Gastrocnemius medialis (tissue), 4 donors: ENCODE measurements at regions of chr12 and their contacts with region 1.

Region 1: DNA sequence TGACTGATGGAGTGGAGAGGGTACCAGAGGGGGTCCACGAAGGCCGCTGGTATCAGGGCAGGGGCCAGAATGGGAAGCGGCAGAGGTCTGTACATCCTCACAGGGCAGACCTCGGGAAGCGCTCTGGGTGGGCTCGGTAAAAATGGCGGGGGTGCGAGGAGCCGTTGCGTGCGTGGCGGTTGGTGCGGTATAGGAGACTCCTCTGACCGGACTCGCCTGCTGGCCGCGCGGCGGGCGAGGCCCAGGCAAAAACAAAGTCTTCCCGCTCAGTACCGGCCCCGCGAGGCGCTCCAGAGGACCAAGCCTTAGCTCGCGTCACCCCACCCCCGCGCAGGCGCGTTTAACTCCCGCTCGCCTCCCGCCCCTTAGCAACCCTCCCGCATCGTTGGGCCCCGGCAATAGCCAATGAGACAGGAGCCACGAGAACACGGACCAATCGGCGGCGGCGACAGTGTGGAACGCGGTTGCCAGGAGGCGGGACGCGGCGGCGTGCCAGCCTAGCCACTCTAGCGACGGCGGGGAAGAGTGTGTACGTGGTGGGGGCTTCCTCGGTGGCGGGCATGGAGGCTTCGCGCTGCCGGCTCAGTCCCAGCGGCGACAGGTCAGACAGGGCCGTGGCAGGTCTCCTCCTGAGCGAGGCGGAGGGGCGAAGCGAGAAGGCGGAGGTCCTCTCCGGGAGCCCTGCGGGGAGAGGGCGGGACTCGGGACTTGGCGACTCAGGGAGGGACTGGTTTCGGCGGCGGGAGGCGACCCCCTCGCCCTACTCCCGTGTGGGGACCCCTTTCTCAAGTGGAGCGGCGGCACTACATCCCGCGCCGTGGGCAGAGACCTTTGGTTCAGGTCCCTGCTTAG is at the start of gene TULP3:
- DNase-seq: peak; percentile 99
- ATAC-seq: peak; percentile 98
- H3K4me3 ChIP-seq: peak within 1 kb of the TSS; percentile 89 to 96 (median 93)
- H3K27ac ChIP-seq: peak within 1 kb of the TSS; percentile 90 to 96 (median 92)
- H3K4me1 ChIP-seq: peaks cover 15 to 20% of the 10 kb centered on the region in 2 donors
- H3K27me3 ChIP-seq: no peaks in the 10 kb centered on the region
- CTCF ChIP-seq: peak in 1 of 5 experiments; percentile 24
- POLR2A ChIP-seq: peak; percentile 91 to 96
- total RNA-seq, gene TULP3: 2.8 to 15.8 (median 11.2) TPM

Region 2: GRCh38 chr12:2845280-2845679 is 45.3 kb before region 1 on chr12:
- in situ Hi-C with region 1: no loop called
- intact Hi-C with region 1: no loop called
- DNase-seq: no peak
- ATAC-seq: peak in 1 of 2 donors; percentile 28
- H3K4me3 ChIP-seq: no peak overlapping the region
- H3K27ac ChIP-seq: peak overlapping the region in 2 of 4 donors; percentile 33 to 52
- H3K4me1 ChIP-seq: no peaks in the 10 kb centered on the region
- H3K27me3 ChIP-seq: no peaks in the 10 kb centered on the region
- CTCF ChIP-seq: no peak
- POLR2A ChIP-seq: no peak

Region 3: DNA sequence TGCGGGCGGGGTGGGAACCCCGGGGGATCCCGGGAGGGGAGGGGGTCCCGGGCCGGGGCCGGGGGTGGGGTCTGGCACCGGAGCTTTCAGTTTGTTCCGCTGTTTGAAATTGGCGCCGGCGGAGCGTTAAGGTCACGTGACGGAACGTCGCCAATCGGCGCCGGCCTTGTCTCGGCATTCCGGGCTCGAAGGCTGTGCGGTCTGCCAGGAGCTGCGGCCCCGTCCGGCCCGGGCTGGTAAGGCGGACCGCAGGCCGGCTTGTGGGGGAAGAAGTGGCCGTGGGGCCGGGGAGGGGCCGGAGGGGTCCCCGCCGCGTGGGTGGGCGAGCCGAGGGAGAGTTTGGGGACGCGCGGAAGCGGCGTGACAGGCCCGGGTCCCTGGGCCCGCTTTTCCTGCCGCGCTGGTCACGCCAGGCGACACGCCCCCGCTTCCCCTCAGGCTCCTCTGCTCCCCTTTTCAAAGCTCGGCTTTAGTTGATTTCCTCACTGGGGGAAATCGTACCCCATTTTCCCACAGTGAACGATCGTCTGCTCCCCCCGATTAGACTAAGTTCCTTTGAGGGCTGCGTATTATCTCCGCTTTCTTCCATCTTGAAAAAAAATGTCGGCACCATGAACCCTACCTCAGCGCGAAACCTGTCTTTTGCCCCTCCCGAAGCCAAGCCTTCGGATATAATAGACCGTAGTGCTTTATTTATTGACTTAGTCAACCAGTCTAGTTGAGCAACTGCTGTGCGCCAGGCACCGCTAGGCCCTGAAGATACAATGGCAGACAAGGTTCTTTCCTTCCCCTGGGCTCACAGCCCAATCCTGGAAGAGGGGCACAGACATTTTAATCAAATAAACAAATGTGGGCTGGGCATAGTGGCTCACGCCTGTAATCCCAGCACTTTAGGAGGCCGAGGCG is 13.3 kb before region 1 on chr12 and contains the starts of genes FOXM1 and RHNO1:
- in situ Hi-C with region 1: no loop called
- intact Hi-C with region 1: loop called (anchors 1 kb)
- DNase-seq: peak; percentile 84 to 87
- ATAC-seq: peak; percentile 95 to 96
- H3K4me3 ChIP-seq: peak within 1 kb of the TSS; percentile 75 to 95 (median 91)
- H3K27ac ChIP-seq: peak within 1 kb of the TSS; percentile 82 to 87 (median 86)
- H3K4me1 ChIP-seq: peaks cover 0 to 11% of the 10 kb centered on the region in 2 donors
- H3K27me3 ChIP-seq: no peaks in the 10 kb centered on the region
- CTCF ChIP-seq: peak in 4 of 5 experiments; percentile 17 to 34 (median 24)
- POLR2A ChIP-seq: peak; percentile 39 to 46
- total RNA-seq, gene FOXM1: 0.95 to 1.1 TPM in 2 of 4 donors, not detected in the others
- total RNA-seq, gene RHNO1: 4.9 to 11.8 (median 6.7) TPM

Region 4: GRCh38 chr12:2922329-2922728 is 31.7 kb after region 1 on chr12:
- in situ Hi-C with region 1: no loop called
- intact Hi-C with region 1: loop called (anchors 1 kb)
- DNase-seq: no peak
- ATAC-seq: no peak
- H3K4me3 ChIP-seq: no peak overlapping the region
- H3K27ac ChIP-seq: peak overlapping the region in 1 of 4 donors; percentile 62
- H3K4me1 ChIP-seq: peaks cover 5 to 17% of the 10 kb centered on the region in 2 donors
- H3K27me3 ChIP-seq: no peaks in the 10 kb centered on the region
- CTCF ChIP-seq: no peak
- POLR2A ChIP-seq: no peak

Region 5: GRCh38 chr12:2959505-2960389 is 69.1 kb after region 1 on chr12:
- in situ Hi-C with region 1: no loop called
- intact Hi-C with region 1: loop called (anchors 5 kb)
- DNase-seq: peak; percentile 56 to 80
- ATAC-seq: peak; percentile 33 to 43
- H3K4me3 ChIP-seq: peak overlapping the region; percentile 61 to 87 (median 74)
- H3K27ac ChIP-seq: peak overlapping the region; percentile 87 to 98 (median 96)
- H3K4me1 ChIP-seq: peaks cover 40 to 46% of the 10 kb centered on the region in 2 donors
- H3K27me3 ChIP-seq: no peaks in the 10 kb centered on the region
- CTCF ChIP-seq: peak in 3 of 5 experiments; percentile 18 to 26 (median 20)
- POLR2A ChIP-seq: peak; percentile 91

Region 6: DNA sequence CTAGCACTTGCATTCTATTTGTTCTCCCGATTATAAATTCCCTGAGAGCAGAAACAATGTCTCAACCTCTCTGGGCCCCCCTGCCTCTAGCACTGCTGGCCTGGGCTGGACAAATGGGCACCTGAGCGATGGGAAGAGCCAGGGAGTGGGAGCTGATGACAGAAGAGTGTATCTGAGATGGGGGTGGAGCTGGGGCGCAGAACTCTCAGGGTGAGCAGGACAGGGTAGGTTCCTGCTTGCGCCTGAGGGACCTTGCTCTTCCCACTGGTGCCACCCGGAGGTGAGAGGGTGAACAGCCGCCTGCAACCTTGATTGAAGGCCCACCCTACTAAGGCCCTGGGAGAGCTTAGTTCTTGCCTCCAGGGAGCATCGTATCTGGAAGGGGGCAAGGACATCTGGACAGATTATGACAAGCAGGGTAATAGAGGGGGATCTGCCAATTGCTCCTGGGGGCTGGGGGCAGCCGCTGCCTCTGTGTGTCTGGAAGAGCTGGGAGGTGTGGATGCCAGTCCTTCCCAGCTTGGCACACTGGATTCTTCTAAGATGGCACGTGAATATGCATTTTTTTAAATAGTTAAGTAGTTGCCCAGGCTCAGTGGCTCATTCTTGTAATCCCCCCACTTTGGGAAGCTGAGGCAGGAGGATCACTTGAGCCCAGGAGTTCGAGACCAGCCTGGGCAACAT is 143.6 kb after region 1 on chr12:
- in situ Hi-C with region 1: loop called in 3 of 4 experiments (anchors 10 to 25 kb)
- intact Hi-C with region 1: loop called (anchors 2 kb)
- DNase-seq: peak; percentile 67 to 94
- ATAC-seq: peak; percentile 79 to 81
- H3K4me3 ChIP-seq: peak overlapping the region in 3 of 4 donors; percentile 20 to 33 (median 24)
- H3K27ac ChIP-seq: peak overlapping the region; percentile 78 to 95 (median 91)
- H3K4me1 ChIP-seq: peaks cover 24 to 36% of the 10 kb centered on the region in 2 donors
- H3K27me3 ChIP-seq: no peaks in the 10 kb centered on the region
- CTCF ChIP-seq: peak; percentile 83 to 91 (median 89)
- POLR2A ChIP-seq: peak in 1 of 2 donors; percentile 65

Region 7: GRCh38 chr12:3041558-3042164 is 151.0 kb after region 1 on chr12:
- in situ Hi-C with region 1: loop called in 3 of 4 experiments (anchors 10 to 25 kb)
- intact Hi-C with region 1: no loop called
- DNase-seq: peak in 1 of 2 donors; percentile 69
- ATAC-seq: peak; percentile 57 to 67
- H3K4me3 ChIP-seq: no peak overlapping the region
- H3K27ac ChIP-seq: peak overlapping the region in 3 of 4 donors; percentile 4 to 62 (median 39)
- H3K4me1 ChIP-seq: peaks cover 20 to 35% of the 10 kb centered on the region in 2 donors
- H3K27me3 ChIP-seq: no peaks in the 10 kb centered on the region
- CTCF ChIP-seq: peak; percentile 48 to 79 (median 64)
- POLR2A ChIP-seq: no peak

Region 8: DNA sequence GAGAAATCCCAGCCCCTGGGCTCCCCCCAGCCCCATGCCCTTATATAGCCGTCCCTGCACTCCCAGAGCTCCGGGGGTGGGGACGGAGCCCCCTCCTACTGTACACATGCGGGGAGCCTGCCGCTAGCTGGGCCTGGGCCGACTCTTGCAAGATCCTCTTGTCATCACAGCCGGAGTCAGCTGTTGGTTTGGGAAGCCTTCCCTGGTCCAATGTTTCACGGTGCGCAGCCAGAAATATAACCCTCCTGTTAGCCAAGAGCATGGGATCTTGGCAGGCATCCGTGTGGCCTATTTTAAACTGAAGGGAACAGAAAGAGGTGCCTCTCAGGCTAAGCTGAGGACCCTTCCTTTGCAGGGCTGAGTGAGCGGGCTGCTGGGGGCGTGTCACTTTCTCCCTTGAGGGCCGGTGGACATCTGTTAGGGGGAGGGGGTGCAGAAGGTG is 361.9 kb after region 1 on chr12:
- in situ Hi-C with region 1: no loop called
- intact Hi-C with region 1: loop called (anchors 10 kb)
- DNase-seq: peak; percentile 95 to 98
- ATAC-seq: peak; percentile 73 to 85
- H3K4me3 ChIP-seq: peak overlapping the region in 1 of 4 donors; percentile 19
- H3K27ac ChIP-seq: peak overlapping the region; percentile 90 to 97 (median 94)
- H3K4me1 ChIP-seq: peaks cover 78 to 88% of the 10 kb centered on the region in 2 donors
- H3K27me3 ChIP-seq: no peaks in the 10 kb centered on the region
- CTCF ChIP-seq: no peak
- POLR2A ChIP-seq: peak in 1 of 2 donors; percentile 45

Region 9: GRCh38 chr12:3405821-3406220 is 515.2 kb after region 1 on chr12:
- in situ Hi-C with region 1: no loop called
- intact Hi-C with region 1: no loop called
- DNase-seq: no peak
- ATAC-seq: no peak
- H3K4me3 ChIP-seq: no peak overlapping the region
- H3K27ac ChIP-seq: no peak overlapping the region
- H3K4me1 ChIP-seq: no peaks in the 10 kb centered on the region
- H3K27me3 ChIP-seq: no peaks in the 10 kb centered on the region
- CTCF ChIP-seq: no peak
- POLR2A ChIP-seq: no peak